IMR-90 (cell line): ENCODE measurements at regions of chr2 and their contacts with region 1.

Region 1: GRCh38 chr2:113739849-113740248 is 16.6 kb downstream of the SLC35F5 start:
- DNase-seq: no peak
- ATAC-seq: no peak
- H3K4me3 ChIP-seq: no peak overlapping the region
- H3K27ac ChIP-seq: no peak overlapping the region
- H3K4me1 ChIP-seq: no peaks in the 10 kb centered on the region
- H3K27me3 ChIP-seq: no peaks in the 10 kb centered on the region
- CTCF ChIP-seq: no peak
- POLR2A ChIP-seq: no peak
- RAD21 ChIP-seq: no peak

Region 2: GRCh38 chr2:113784823-113785744 is 45.2 kb after region 1 on chr2:
- CTCF ChIA-PET with region 1: no interaction called
- POLR2A ChIA-PET with region 1: no interaction called
- dilution Hi-C with region 1: no loop called
- in situ Hi-C with region 1: no loop called
- intact Hi-C with region 1: no loop called
- DNase-seq: no peak
- ATAC-seq: no peak
- H3K4me3 ChIP-seq: no peak overlapping the region
- H3K27ac ChIP-seq: no peak overlapping the region
- H3K4me1 ChIP-seq: no peaks in the 10 kb centered on the region
- H3K27me3 ChIP-seq: no peaks in the 10 kb centered on the region; the same call in 1 of the 2 replicates
- CTCF ChIP-seq: no peak
- POLR2A ChIP-seq: no peak
- RAD21 ChIP-seq: no peak

Region 3: GRCh38 chr2:113930448-113930847 is 190.6 kb after region 1 on chr2:
- CTCF ChIA-PET with region 1: no interaction called
- POLR2A ChIA-PET with region 1: no interaction called
- dilution Hi-C with region 1: no loop called
- in situ Hi-C with region 1: no loop called
- intact Hi-C with region 1: loop called (anchors 5 kb)
- DNase-seq: peak; percentile 39
- ATAC-seq: peak; percentile 52; the same call in 1 of the 2 replicates
- H3K4me3 ChIP-seq: no peak overlapping the region
- H3K27ac ChIP-seq: no peak overlapping the region; the same call in 1 of the 2 replicates
- H3K4me1 ChIP-seq: peaks cover 5% of the 10 kb centered on the region
- H3K27me3 ChIP-seq: no peaks in the 10 kb centered on the region
- CTCF ChIP-seq: no peak
- POLR2A ChIP-seq: no peak
- RAD21 ChIP-seq: no peak

Region 4: DNA sequence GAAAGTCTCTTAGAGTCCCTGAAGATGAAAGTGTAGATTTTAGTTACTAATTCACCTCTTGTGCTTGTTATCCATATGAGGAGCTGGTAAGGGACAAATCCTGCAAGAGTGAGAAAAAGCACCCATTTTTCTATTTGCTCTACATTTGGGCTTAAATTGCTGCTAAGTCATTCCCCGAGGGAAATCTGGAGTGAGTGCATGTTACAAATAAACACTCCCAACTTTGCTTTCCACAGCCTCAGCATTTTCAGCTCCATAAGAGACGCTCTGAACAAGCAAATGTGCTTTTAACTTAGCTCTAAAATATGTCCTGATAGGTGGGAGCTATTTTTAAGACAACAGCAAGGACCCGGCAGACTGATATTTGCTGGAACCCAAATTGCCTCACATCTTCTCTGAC is 829.3 kb after region 1 on chr2:
- CTCF ChIA-PET with region 1: no interaction called
- POLR2A ChIA-PET with region 1: no interaction called
- dilution Hi-C with region 1: no loop called
- in situ Hi-C with region 1: no loop called
- intact Hi-C with region 1: no loop called
- DNase-seq: no peak
- ATAC-seq: no peak
- H3K4me3 ChIP-seq: no peak overlapping the region
- H3K27ac ChIP-seq: no peak overlapping the region
- H3K4me1 ChIP-seq: no peaks in the 10 kb centered on the region
- H3K27me3 ChIP-seq: no peaks in the 10 kb centered on the region
- CTCF ChIP-seq: no peak
- POLR2A ChIP-seq: no peak
- RAD21 ChIP-seq: no peak